RWPE1 (cell line): ENCODE measurements at regions of chr9 and their contacts with region 1.

Region 1: GRCh38 chr9:114681594-114682332 is at the start of gene TEX48:
- DNase-seq: peak; percentile 78
- H3K27ac ChIP-seq: peak within 1 kb of the TSS; percentile 6; the same call in 1 of the 2 replicates
- CTCF ChIP-seq: peak; percentile 95

Region 2: DNA sequence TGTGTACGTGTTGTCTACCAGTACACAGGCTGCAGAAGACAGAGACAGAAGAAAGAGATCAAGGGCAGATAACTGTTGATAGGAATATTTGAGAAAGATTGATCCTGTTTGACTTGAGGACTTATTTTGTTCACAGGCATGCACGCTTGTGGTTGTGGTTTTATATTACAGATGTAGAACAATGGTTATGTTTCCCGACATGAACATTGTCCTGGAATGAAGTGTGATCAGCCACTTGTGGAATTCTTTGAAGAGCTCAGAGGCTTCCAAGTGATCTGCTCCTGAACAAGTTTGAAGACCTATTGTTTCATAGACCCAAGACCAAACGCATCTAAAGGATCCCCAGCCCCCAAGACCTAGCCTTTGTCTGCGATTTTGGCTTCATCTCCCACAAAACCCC is 37.9 kb before region 1 on chr9:
- CTCF ChIA-PET with region 1: no interaction called
- POLR2A ChIA-PET with region 1: no interaction called
- DNase-seq: no peak
- H3K27ac ChIP-seq: no peak overlapping the region
- CTCF ChIP-seq: no peak

Region 3: DNA sequence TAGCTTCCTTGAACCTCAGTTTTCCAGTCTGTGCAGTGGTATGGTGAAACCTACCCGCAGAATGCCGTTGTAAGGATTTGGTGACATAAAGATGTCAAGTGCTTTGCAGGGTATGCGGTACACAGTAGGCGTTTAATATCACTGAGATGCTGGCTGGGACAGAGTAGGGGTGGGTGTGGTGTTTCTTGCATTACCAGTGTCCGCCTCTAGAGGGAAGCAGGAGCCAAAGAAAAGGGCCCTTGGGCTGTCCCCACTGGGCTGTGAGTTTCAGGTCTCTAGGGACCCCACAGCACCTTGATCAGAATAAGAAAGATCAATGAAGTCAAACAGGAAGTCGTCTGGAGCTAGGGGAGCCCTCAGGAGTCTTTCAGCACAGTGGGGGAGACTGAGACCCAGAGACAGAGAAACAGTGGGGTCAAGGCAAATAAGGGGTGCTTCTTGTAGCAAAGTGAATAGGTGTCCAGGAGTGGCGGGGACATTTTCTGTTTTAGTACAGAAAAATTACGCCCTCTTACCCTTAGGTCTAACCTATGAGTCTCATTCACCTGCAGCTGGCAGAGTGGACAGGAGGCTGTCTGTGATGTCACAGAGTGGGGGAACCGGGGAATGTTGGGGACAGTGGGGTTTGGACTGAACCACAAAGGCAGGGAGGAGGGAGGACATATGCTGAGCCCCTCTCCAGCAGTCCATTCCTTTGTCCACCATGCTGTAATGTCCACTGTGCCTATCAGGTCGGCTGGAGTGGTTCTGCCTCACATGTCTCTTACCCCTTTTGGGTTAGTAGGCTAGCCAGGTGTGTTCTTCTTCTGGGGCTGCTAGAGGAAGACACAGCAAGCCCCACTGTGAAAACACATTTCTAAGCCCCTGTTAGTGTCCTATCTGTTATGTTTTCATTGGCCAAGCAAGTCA is 19.4 kb before region 1 on chr9:
- CTCF ChIA-PET with region 1: interaction called, 11 read pairs
- POLR2A ChIA-PET with region 1: no interaction called
- DNase-seq: peak; percentile 94
- H3K27ac ChIP-seq: no peak overlapping the region
- CTCF ChIP-seq: peak; percentile 96

Region 4: DNA sequence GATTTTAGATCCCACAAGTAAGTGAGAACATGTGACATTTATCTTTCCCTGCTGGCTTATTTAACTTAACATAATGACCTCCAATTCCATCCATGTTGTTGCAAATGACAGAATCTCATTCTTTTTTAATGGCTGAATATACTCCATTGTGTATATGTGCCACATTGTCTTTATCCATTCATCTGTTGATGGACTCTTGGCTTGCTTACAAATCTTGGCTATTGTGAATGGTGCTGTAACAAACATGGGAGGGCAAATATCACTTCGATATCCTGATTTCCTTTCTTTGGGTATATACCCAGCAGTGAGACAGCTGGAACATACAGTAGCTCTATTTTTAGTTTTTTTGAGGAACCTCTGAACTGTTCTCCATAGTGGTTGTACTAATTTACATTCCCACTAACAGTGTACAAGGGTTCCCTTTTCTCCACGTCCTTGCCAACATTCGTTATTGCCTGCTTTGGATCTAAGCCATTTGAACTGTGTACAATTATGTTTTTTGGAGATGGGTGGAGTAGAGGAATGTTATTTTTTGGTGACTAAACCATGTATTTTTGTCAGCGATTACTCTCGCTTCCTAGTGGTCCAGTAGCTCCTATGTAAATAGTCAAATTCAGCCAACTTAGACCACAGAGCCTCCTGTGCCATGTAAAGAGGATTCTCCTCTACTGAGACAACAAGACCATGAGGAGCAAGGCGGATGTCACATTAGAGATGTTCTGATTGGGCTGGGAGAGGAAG is 63.5 kb after region 1 on chr9:
- CTCF ChIA-PET with region 1: no interaction called
- POLR2A ChIA-PET with region 1: no interaction called
- DNase-seq: no peak
- H3K27ac ChIP-seq: peak overlapping the region; percentile 42
- CTCF ChIP-seq: no peak

Region 5: DNA sequence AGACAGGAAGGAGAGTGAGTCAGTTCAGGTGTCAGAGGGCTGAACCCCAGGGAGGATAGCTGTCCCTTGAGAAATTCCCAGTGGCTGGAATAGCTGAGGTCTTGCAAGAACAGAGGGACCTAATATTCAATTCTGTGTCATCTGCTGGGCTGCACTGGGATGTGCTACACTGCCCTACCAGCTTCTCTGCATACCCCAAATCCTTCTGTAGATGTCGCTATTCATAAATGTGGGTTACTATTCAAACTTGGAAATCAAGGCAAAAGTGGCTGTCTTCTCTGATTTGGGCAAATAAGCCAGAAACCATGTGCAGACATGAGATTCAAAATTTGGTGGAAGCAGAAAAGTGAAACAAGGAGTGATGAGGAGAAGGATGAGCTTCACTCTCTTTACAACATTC is 232.4 kb after region 1 on chr9:
- CTCF ChIA-PET with region 1: interaction called, 29 read pairs
- POLR2A ChIA-PET with region 1: no interaction called
- DNase-seq: no peak
- H3K27ac ChIP-seq: no peak overlapping the region
- CTCF ChIP-seq: no peak

Region 6: DNA sequence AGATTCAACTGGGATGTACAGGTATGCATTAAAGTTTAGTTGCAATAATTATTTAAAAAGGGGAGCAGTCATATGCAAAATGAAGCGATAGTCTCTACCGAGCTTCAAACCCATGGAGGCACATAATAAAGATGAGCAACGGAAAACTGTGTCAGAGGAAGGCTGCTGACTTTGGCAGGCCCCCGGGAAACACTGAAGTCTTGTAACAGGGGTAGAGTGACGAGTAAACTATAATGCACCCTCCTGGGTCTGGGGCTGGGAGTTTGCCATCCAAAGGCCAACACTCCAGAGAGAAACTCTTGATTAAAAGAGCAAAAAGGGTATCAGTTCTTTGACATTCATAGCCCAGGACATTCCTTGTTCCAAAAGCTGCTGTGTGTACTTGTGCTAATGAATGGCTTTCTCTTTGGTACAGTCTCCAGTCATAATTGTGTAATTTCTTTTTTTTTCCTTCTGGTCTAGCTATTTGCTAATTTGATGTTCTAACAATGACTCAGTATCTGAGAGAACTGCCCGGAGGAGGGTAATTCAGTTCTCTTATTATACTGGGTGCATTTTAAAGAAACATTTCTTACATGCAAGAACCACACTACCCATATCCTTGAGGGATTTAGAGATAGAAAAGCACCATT is 377.0 kb after region 1 on chr9:
- CTCF ChIA-PET with region 1: no interaction called
- POLR2A ChIA-PET with region 1: no interaction called
- DNase-seq: peak; percentile 89
- H3K27ac ChIP-seq: no peak overlapping the region; the same call in 1 of the 2 replicates
- CTCF ChIP-seq: no peak